Activated B cell treated with CpG ODN at 0.5 μM for 24 hours (primary cell): ENCODE measurements at regions of chr2 and their contacts with region 1.

Region 1: GRCh38 chr2:143162123-143162837 is 33.1 kb downstream of the ARHGAP15 start:
- DNase-seq: no peak
- ATAC-seq: peak; percentile 95
- H3K4me3 Mint-ChIP-seq: no peak overlapping the region
- H3K27ac Mint-ChIP-seq: peak overlapping the region; percentile 37
- H3K4me1 Mint-ChIP-seq: peaks cover 76% of the 10 kb centered on the region
- H3K27me3 Mint-ChIP-seq: no peaks in the 10 kb centered on the region
- CTCF ChIP-seq: no peak

Region 2: DNA sequence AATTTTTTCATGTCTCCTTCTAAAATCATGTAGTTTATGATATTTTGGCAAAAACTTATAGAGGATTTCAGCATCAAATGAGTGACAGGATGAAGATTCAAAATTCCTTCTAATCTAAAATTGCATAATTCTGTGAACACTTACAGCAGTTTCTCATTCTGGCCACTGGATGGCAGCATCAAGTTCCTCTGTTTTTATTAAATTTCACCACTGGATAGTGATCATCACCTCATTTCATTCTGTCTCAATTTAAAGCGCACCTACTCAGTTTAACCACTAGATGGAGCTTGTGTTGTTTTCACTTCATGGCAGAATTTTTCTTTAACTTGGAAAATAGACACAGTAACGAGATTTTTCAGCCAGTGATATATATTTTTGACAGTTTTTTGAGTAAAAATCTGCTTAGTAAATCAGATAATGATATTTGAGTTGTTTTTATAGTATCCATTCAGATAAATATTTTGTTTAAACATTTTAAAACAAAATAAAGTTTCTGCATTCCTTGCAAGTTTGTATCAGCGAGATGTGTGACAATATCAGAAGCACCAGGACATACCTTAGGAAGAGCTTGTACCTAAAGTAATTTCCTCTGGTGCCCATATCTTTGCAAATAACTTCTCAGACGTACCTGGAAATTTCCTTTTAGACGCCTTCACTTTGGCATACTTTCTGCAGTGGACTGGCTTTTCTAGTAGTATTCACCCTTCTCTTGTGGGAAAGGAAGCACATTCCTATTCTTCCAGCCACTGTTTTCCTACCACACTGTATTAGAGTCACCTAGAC is 127.8 kb before region 1 on chr2:
- CTCF ChIA-PET with region 1: no interaction called
- POLR2A ChIA-PET with region 1: no interaction called
- intact Hi-C with region 1: loop called (anchors 2 kb)
- DNase-seq: no peak
- ATAC-seq: peak; percentile 99
- H3K4me3 Mint-ChIP-seq: no peak overlapping the region
- H3K27ac Mint-ChIP-seq: no peak overlapping the region
- H3K4me1 Mint-ChIP-seq: peaks cover 9% of the 10 kb centered on the region
- H3K27me3 Mint-ChIP-seq: no peaks in the 10 kb centered on the region
- CTCF ChIP-seq: peak; percentile 79

Region 3: GRCh38 chr2:143121079-143121478 is 41.2 kb before region 1 on chr2:
- CTCF ChIA-PET with region 1: interaction called, 10 read pairs
- POLR2A ChIA-PET with region 1: no interaction called
- intact Hi-C with region 1: no loop called
- DNase-seq: no peak
- ATAC-seq: peak; percentile 45
- H3K4me3 Mint-ChIP-seq: peak overlapping the region; percentile 50
- H3K27ac Mint-ChIP-seq: no peak overlapping the region
- H3K4me1 Mint-ChIP-seq: peaks cover 14% of the 10 kb centered on the region
- H3K27me3 Mint-ChIP-seq: no peaks in the 10 kb centered on the region
- CTCF ChIP-seq: no peak

Region 4: GRCh38 chr2:143140864-143141661 is 21.2 kb before region 1 on chr2:
- CTCF ChIA-PET with region 1: interaction called, 9 read pairs
- POLR2A ChIA-PET with region 1: interaction called, 9 read pairs
- intact Hi-C with region 1: loop called (anchors 1 kb)
- DNase-seq: no peak
- ATAC-seq: peak; percentile 91
- H3K4me3 Mint-ChIP-seq: peak overlapping the region; percentile 56
- H3K27ac Mint-ChIP-seq: peak overlapping the region; percentile 89
- H3K4me1 Mint-ChIP-seq: peaks cover 92% of the 10 kb centered on the region
- H3K27me3 Mint-ChIP-seq: no peaks in the 10 kb centered on the region
- CTCF ChIP-seq: no peak

Region 5: GRCh38 chr2:143177096-143177786 is 15.0 kb after region 1 on chr2:
- CTCF ChIA-PET with region 1: interaction called, 4 read pairs
- POLR2A ChIA-PET with region 1: interaction called, 6 read pairs
- intact Hi-C with region 1: loop called (anchors 1 kb)
- DNase-seq: no peak
- ATAC-seq: peak; percentile 94
- H3K4me3 Mint-ChIP-seq: peak overlapping the region; percentile 87
- H3K27ac Mint-ChIP-seq: peak overlapping the region; percentile 94
- H3K4me1 Mint-ChIP-seq: peaks cover 44% of the 10 kb centered on the region
- H3K27me3 Mint-ChIP-seq: no peaks in the 10 kb centered on the region
- CTCF ChIP-seq: no peak

Region 6: DNA sequence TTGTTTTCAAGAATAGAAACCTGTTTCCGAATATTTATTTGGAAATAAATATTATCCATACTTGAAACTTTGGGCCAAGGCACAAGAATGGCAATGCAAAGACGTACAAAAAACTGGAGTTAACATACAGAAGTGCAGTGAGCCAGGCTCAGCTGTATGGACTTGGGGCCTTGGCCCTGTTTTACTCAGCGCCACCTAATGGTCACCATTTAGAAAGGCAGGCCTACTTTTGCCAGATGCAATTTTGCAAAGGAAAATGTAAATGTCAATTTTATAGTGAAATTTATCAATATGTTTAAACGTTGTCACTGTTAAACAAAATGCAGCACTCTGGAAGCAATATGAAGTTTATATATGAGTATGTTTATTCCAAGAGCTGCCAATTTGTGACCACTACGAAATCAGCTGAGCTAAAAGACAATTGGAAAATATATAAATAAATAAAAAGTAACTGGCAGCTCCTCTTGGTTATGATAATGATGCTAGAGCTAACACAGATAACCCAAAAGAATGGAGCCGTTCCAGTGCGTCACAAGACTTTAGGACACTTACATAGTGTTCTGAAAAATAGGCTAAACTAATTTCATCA is 121.9 kb after region 1 on chr2:
- CTCF ChIA-PET with region 1: interaction called, 15 read pairs
- POLR2A ChIA-PET with region 1: no interaction called
- intact Hi-C with region 1: loop called (anchors 1 kb)
- DNase-seq: no peak
- ATAC-seq: peak; percentile 88
- H3K4me3 Mint-ChIP-seq: no peak overlapping the region
- H3K27ac Mint-ChIP-seq: no peak overlapping the region
- H3K4me1 Mint-ChIP-seq: peaks cover 11% of the 10 kb centered on the region
- H3K27me3 Mint-ChIP-seq: no peaks in the 10 kb centered on the region
- CTCF ChIP-seq: peak; percentile 72